GM10248 (cell line): ENCODE measurements at regions of chr5 and their contacts with region 1.

Region 1: GRCh38 chr5:79959407-79959806 is 31.7 kb downstream of the MTX3 start:
- DNase-seq: no peak
- CTCF ChIP-seq: no peak

Region 2: DNA sequence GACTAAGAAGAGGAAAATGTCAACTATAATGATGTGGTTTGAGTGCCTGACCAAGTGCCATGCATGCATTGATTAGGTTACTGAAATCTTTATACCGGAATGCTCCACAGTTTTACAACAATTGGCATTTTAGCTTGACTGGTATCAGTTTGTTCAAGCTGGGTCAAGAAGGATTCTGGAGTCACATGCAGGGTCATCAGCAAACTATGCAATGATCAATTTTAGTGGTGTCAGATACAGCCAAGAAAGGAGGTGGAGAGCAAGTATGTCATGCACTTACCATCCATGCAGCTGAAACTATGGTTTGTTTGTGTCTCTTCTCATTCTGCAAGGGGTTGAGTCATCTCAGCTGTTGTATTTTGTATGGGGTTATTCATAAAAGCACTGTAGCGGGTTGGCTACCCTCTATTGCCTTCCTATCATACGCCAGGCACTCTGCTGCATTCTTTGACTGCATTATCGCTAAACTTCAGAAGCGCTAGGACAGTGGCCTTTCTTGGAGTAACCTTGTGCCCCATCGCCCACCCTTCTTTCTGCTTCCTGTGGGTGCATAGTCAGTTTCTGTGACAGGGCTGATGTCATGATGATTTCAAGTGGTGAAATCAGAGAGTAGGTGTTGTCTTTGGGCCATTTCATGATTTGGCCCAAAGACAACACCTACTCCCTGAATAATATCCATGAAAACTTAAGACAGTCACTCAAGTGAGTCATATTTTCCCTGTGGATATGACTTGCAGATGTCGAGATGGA is 113.8 kb before region 1 on chr5:
- CTCF ChIA-PET with region 1: no interaction called
- POLR2A ChIA-PET with region 1: no interaction called
- DNase-seq: no peak
- CTCF ChIP-seq: no peak

Region 3: GRCh38 chr5:79924936-79925893 is 34.2 kb before region 1 on chr5:
- CTCF ChIA-PET with region 1: no interaction called
- POLR2A ChIA-PET with region 1: no interaction called
- DNase-seq: no peak
- CTCF ChIP-seq: no peak

Region 4: GRCh38 chr5:79974891-79975290 is 15.5 kb after region 1 on chr5:
- CTCF ChIA-PET with region 1: interaction called, 10 read pairs
- POLR2A ChIA-PET with region 1: no interaction called
- DNase-seq: no peak
- CTCF ChIP-seq: no peak

Region 5: GRCh38 chr5:80025069-80025468 is 65.7 kb after region 1 on chr5:
- CTCF ChIA-PET with region 1: no interaction called
- POLR2A ChIA-PET with region 1: no interaction called
- DNase-seq: no peak
- CTCF ChIP-seq: no peak